OCI-LY7 (cell line): ENCODE measurements at regions of chr12 and their contacts with region 1.

Region 1: DNA sequence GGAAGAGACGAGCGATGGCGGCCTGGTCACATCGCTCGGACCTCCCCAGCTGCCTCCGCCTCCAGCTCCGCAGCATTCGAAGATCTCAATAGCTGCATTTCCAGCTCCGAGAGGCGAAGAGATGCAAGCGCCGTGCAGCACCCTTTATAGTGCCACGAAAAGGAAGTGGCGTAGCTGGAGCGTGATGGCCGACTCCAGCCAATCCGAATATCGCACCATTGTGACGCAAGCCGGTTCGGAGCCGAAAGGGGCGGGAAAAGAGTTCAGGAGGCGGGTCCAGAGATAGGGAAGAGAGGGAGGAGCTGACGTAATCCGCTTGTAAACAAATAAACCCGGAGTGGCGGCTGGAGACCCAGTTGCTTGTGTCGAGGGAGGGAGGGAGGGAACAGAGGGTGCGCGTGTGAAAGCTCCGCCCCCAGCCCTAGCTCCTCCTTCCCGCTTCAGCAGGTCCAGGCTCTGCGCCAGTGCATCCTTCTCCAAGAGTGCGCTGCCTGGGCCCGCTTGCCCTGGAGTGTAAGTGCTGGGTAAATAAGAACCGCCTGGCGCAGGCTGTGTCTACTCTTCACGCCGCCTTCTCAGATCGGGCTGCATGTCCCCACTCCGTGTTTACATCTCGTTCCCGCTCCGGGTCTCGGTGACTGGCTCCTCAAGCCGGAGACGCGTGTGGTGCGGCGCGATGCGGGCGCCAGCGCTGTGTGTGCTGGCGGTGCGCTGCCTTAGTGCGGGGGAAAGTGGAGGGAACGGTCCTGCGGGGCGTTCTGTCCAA is at the start of gene BTG1:
- DNase-seq: peak; percentile 100
- H3K4me3 ChIP-seq: peak within 1 kb of the TSS; percentile 88
- H3K27ac ChIP-seq: peak within 1 kb of the TSS; percentile 73
- H3K4me1 ChIP-seq: peaks cover 16% of the 10 kb centered on the region
- CTCF ChIP-seq: no peak
- total RNA-seq, gene BTG1: 18.0 and 32.8 TPM in 2 replicates

Region 2: DNA sequence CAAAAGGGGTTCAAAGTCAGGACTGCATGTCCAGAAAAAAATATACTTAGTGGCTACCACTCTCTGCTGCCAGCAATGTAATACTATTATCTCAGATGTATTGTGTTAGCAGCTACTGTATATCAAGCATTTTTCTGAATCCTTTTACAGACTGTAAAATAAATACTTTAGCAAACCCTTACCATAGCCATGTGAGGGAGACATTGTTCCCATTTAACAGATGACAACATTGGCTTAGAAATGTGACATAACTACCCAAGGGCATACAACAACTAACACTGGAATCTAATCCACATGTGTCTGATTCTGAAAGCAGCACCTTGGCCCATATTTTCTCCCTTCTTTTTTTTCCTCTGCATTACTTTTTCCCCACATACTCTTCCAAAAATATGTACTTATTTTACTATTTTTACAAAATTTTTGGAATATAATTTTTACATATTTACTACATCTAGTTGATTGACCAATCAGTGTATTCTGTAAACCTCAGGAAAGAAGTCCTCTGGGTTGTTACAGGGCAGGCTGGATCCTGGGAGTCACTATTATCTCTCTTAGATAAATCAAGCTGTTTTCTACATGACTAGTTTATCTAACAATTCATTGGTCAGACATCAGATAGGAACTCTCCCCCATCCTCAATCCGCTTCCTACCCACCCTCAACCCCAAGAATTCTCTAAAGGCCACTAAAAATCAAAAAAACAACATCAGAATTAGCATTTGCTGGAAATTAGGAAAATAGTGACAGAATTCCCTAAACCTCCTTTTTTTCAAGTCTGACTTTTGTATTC is 154.3 kb before region 1 on chr12:
- CTCF ChIA-PET with region 1: no interaction called
- POLR2A ChIA-PET with region 1: no interaction called
- intact Hi-C with region 1: loop called (anchors 5 kb)
- DNase-seq: peak; percentile 52
- H3K4me3 ChIP-seq: no peak overlapping the region
- H3K27ac ChIP-seq: no peak overlapping the region
- H3K4me1 ChIP-seq: no peaks in the 10 kb centered on the region
- CTCF ChIP-seq: peak; percentile 62

Region 3: GRCh38 chr12:92170050-92170449 is 24.1 kb after region 1 on chr12:
- CTCF ChIA-PET with region 1: interaction called, 8 read pairs
- POLR2A ChIA-PET with region 1: interaction called, 65 read pairs
- intact Hi-C with region 1: loop called (anchors 1 kb)
- DNase-seq: no peak
- H3K4me3 ChIP-seq: no peak overlapping the region
- H3K27ac ChIP-seq: no peak overlapping the region
- H3K4me1 ChIP-seq: peaks cover 35% of the 10 kb centered on the region
- CTCF ChIP-seq: no peak

Region 4: DNA sequence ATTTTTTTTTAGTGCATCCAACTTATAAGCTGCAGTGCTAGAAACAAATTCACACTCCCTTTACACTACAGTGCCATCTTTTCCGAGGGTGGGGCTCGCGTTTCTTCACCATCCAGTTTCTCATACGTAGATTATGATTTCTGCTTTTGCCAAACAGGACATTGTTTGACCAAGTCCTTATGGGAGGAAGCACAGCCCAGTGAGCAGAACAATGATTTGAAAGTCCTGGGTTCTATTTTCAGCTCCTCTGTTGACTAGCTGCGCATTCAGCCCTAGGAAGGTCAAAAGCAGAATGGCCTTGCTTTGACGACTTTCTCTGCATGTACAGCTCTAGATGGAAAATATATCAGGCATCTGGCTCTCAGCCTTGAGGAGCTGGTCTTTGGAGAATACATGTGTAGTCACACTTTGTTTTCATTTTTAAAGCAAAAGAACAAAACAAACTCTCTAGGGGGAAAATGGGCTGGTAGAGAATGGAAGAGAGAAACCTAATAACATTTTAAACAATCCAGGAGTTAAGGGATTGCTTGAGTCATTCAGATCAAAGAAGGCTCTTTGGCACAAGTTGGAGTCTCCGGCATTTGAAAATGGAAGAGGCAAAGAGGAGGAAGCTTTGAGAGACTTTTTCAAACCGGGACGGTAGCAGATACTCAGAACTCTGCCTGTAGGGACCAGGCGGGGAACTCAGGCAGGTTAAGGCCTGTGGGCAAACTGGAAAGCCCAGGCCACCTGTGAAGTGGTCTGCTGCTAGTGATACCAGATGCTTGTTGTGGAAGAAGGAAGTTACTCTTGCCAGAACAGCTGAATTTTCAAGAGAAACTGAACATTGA is 299.6 kb after region 1 on chr12:
- CTCF ChIA-PET with region 1: no interaction called
- POLR2A ChIA-PET with region 1: interaction called, 40 read pairs
- intact Hi-C with region 1: loop called (anchors 1 kb)
- DNase-seq: peak; percentile 98
- H3K4me3 ChIP-seq: peak overlapping the region; percentile 58
- H3K27ac ChIP-seq: peak overlapping the region; percentile 99
- H3K4me1 ChIP-seq: peaks cover 65% of the 10 kb centered on the region
- CTCF ChIP-seq: no peak

Region 5: DNA sequence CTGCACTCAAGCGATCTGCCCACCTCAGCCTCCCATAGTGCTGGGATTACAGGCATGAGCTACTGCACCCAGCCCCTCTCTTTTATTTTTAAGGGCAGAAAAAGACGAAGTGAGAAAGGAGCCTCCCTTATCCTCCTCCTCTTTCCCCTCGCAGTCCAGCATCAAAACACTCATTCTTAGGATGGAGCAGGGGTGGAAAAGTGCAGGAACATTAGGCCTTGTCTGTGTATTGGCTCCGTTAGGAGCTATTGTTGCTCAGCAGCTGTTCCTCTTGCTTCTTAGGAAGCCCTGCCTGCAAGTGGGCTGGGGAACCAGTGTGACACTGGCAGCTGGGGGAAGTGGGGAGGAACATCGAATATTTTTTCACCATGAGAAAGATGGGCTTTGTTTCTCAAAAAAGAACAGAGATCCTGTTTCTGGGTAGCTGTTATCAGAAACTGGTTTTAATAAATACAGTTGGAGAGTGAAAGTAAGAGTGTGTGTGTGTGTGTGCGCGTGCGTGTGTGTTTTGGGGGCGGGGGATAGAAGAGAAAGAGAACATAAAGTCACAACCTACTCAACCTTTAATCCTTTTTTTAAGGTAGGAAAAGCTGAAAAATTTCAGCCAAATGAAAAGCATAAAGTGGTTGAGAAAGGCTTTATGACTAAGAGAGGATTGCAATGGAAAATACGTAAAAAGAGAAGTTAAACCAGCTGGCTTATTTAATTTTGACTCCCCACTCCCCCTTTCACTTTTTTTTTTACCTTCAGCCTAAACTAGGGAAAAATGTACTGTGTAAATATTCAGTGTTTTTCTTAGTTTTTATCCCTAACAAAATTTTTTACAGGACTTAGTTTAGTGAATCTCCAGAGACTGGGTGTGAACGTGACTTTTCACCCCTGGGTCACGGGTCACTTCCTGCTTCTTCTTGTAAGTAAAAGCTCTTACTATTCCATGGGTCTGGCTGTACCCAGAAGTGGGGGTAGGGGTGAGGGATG is 359.6 kb after region 1 on chr12:
- CTCF ChIA-PET with region 1: interaction called, 3 read pairs
- POLR2A ChIA-PET with region 1: interaction called, 44 read pairs
- intact Hi-C with region 1: no loop called
- DNase-seq: peak; percentile 73
- H3K4me3 ChIP-seq: peak overlapping the region; percentile 55
- H3K27ac ChIP-seq: peak overlapping the region; percentile 79
- H3K4me1 ChIP-seq: peaks cover 53% of the 10 kb centered on the region
- CTCF ChIP-seq: no peak